WTC11 (cell line): ENCODE measurements at regions of chr1 and their contacts with region 1.

Region 1: GRCh38 chr1:24150234-24151174 is 7.6 kb upstream of the IL22RA1 start:
- DNase-seq: peak; percentile 99
- ATAC-seq: peak; percentile 84
- H3K4me3 Mint-ChIP-seq: peak overlapping the region; percentile 63
- H3K27ac Mint-ChIP-seq: peak overlapping the region; percentile 99
- H3K4me1 Mint-ChIP-seq: peaks cover 46% of the 10 kb centered on the region
- H3K27me3 Mint-ChIP-seq: no peaks in the 10 kb centered on the region; the same call in 1 of the 2 replicates
- CTCF ChIP-seq: peak; percentile 88

Region 2: DNA sequence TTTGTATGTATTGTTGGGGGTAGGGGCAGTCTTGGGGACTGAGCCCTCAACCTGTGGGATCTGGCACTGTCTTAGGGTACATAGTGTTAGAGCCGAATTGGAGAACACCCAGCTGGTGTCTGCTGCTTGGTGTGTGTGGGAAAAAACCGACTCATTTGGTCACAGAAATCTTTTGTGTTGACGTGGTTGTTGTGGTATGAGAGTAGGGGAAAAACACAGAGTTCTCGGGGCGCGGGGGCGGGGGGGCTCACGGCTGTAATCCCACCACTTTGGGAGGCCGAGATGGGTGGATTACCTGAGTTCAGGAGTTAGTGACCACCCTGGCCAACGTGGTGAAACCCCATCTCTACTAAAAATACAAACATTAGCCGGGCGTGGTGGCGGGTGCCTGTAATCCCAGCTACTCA is 155.1 kb before region 1 on chr1:
- CTCF ChIA-PET with region 1: no interaction called
- POLR2A ChIA-PET with region 1: no interaction called
- DNase-seq: no peak
- ATAC-seq: no peak
- H3K4me3 Mint-ChIP-seq: no peak overlapping the region
- H3K27ac Mint-ChIP-seq: peak overlapping the region; percentile 76; the same call in 1 of the 2 replicates
- H3K4me1 Mint-ChIP-seq: peaks cover 7% of the 10 kb centered on the region
- H3K27me3 Mint-ChIP-seq: no peaks in the 10 kb centered on the region; the same call in 1 of the 2 replicates
- CTCF ChIP-seq: no peak

Region 3: DNA sequence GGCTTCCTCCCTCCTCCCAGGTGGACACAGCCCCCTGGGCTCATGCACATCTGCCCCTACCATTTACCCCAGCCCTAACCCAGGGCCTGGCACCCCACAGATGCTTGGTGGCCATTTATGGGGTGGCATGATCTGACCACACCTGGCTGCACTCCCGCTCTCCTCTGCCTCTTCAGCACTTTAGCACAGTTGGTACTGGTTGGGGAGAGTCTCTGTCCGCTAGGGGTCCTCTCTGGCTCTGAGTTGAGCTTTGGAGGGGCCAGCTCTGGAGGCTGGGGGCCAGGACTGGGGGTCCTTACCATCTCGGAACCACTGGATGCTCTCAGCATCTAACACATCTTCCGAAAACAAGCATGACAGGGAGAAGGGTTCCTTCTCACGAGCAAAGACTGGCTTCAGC is 56.0 kb before region 1 on chr1:
- CTCF ChIA-PET with region 1: interaction called, 15 read pairs
- POLR2A ChIA-PET with region 1: interaction called, 3 read pairs
- DNase-seq: peak; percentile 35
- ATAC-seq: peak; percentile 78
- H3K4me3 Mint-ChIP-seq: no peak overlapping the region
- H3K27ac Mint-ChIP-seq: peak overlapping the region; percentile 25; the same call in 1 of the 2 replicates
- H3K4me1 Mint-ChIP-seq: peaks cover 9% of the 10 kb centered on the region
- H3K27me3 Mint-ChIP-seq: no peaks in the 10 kb centered on the region
- CTCF ChIP-seq: no peak

Region 4: DNA sequence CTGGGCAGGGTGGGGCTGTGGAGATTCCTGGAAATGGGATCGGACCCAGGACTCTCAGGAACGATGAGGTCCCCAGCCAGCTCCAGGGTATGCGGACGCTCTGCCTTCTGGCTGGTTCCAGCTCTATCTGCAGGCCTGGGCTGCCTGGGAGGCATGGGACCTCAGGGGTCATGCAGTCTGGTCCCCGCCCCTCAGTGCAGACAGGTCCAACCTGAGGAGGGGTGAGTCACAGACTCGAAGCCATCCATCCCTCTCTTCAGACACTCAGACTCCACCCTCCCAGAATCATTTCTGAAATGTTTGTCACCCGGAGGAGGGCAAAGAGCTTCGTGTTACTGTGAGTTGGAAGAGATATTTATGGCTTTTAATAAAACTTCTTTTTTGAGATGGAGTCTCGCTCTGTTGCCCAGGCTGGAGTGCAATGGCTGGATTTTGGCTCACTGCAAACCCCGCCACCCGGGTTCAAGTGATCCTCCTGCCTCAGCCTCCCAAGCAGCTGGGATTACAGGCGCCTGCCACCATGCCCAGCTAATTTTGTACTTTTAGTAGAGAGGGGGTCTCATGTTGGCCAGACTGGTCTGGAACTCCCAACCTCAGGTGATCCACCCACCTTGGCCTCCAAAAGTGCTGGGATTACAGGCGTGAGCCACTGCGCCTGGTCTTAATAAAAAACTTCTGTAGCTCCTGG is 32.6 kb before region 1 on chr1:
- CTCF ChIA-PET with region 1: interaction called, 21 read pairs
- POLR2A ChIA-PET with region 1: interaction called, 3 read pairs
- DNase-seq: no peak
- ATAC-seq: no peak
- H3K4me3 Mint-ChIP-seq: no peak overlapping the region
- H3K27ac Mint-ChIP-seq: no peak overlapping the region
- H3K4me1 Mint-ChIP-seq: peaks cover 20% of the 10 kb centered on the region
- H3K27me3 Mint-ChIP-seq: no peaks in the 10 kb centered on the region
- CTCF ChIP-seq: no peak

Region 5: GRCh38 chr1:24235921-24236781 is 85.6 kb after region 1 on chr1:
- CTCF ChIA-PET with region 1: no interaction called
- POLR2A ChIA-PET with region 1: no interaction called
- DNase-seq: no peak
- ATAC-seq: peak; percentile 69
- H3K4me3 Mint-ChIP-seq: no peak overlapping the region
- H3K27ac Mint-ChIP-seq: no peak overlapping the region
- H3K4me1 Mint-ChIP-seq: peaks cover 19% of the 10 kb centered on the region
- H3K27me3 Mint-ChIP-seq: no peaks in the 10 kb centered on the region
- CTCF ChIP-seq: no peak

Region 6: GRCh38 chr1:24308365-24309015 is 158.0 kb after region 1 on chr1:
- CTCF ChIA-PET with region 1: interaction called, 13 read pairs
- POLR2A ChIA-PET with region 1: interaction called, 5 read pairs
- DNase-seq: peak; percentile 49
- ATAC-seq: peak; percentile 86
- H3K4me3 Mint-ChIP-seq: no peak overlapping the region
- H3K27ac Mint-ChIP-seq: 0 out of 2 replicates have a peak overlapping the region, but pooled peaks have one; percentile 29
- H3K4me1 Mint-ChIP-seq: peaks cover 64% of the 10 kb centered on the region
- H3K27me3 Mint-ChIP-seq: no peaks in the 10 kb centered on the region
- CTCF ChIP-seq: no peak

Region 7: DNA sequence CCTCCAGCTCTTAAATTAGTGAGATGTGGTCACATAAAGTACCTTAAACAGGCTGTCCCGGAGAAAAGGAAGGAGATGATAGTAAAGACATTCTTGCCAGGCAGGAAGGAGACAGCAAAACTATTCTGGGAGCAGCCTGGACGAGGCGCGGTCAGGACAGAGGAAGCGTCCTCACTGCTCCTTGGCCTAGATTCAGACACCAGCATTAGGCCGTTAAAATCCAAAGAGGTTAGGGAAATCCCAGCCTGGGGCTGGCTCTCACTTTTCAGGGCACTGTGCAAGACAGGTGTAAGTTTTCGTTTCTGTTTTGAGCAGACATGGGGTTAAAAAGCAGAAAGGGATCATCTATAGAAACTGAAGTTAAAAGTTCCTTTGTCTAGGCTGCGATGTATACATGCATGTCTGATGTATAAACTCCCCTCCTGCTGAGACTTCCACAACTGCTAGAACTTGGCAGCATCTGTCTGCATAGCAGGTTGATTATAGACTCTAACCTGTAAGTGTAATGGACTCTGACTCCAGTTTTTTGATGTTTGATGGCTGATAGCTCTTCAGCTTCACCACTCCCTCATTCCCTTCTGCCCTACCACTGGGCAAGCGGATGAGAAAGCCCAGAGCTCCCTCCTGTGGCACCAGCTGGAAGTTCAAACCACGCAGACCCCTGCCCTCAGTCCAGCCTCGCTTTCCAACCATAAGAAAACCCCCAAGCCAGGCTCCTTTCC is 241.5 kb after region 1 on chr1:
- CTCF ChIA-PET with region 1: interaction called, 38 read pairs
- POLR2A ChIA-PET with region 1: no interaction called
- DNase-seq: peak; percentile 84
- ATAC-seq: peak; percentile 91
- H3K4me3 Mint-ChIP-seq: no peak overlapping the region
- H3K27ac Mint-ChIP-seq: no peak overlapping the region
- H3K4me1 Mint-ChIP-seq: peaks cover 34% of the 10 kb centered on the region
- H3K27me3 Mint-ChIP-seq: no peaks in the 10 kb centered on the region
- CTCF ChIP-seq: peak; percentile 72